Activated CD4-positive, alpha-beta memory T cell treated with anti-CD3 and anti-CD28 coated beads, Interleukin-2, amount 10 ng/mL, durations not matched to agents 7 days and 5 days (primary cell): ENCODE measurements at regions of chr7 and their contacts with region 1.

Region 1: GRCh38 chr7:91940572-91941341 is at the start of gene AKAP9:
- DNase-seq: peak; percentile 90
- H3K4me3 Mint-ChIP-seq: peak within 1 kb of the TSS; percentile 89
- H3K27ac Mint-ChIP-seq: peak within 1 kb of the TSS; percentile 91
- H3K4me1 Mint-ChIP-seq: peaks cover 33% of the 10 kb centered on the region
- H3K27me3 Mint-ChIP-seq: no peaks in the 10 kb centered on the region
- total RNA-seq, gene AKAP9: 32.4 to 41.7 TPM

Region 2: DNA sequence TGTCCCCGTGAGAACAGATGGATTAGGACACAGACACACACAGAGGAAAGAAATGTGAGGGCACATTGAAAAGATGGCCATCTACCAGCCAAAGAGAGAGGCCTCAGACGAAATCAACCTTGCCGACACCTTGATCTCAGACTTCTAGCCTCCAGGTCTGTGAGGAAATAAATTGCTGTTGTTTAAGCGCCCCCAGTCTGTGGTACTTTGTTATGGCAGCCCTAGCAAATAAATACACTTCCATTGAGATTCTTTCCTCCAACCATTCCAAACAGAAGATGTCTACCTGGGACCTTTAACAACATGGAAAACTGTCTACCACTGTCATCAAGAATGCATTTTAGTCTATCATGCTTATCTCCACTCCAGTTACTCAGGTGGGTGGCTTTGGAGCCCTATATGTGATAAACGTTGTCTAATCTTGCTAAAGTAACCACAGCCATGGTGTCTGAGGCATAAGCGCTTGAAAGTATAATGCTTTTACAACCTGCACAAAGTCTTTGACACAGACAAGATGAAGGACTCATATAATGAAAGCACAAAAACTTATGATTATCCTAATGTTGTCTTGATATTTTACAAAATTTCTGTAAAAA is 304.5 kb before region 1 on chr7:
- CTCF ChIA-PET with region 1: no interaction called
- POLR2A ChIA-PET with region 1: no interaction called
- DNase-seq: no peak
- H3K4me3 Mint-ChIP-seq: no peak overlapping the region
- H3K27ac Mint-ChIP-seq: no peak overlapping the region
- H3K4me1 Mint-ChIP-seq: no peaks in the 10 kb centered on the region
- H3K27me3 Mint-ChIP-seq: no peaks in the 10 kb centered on the region

Region 3: DNA sequence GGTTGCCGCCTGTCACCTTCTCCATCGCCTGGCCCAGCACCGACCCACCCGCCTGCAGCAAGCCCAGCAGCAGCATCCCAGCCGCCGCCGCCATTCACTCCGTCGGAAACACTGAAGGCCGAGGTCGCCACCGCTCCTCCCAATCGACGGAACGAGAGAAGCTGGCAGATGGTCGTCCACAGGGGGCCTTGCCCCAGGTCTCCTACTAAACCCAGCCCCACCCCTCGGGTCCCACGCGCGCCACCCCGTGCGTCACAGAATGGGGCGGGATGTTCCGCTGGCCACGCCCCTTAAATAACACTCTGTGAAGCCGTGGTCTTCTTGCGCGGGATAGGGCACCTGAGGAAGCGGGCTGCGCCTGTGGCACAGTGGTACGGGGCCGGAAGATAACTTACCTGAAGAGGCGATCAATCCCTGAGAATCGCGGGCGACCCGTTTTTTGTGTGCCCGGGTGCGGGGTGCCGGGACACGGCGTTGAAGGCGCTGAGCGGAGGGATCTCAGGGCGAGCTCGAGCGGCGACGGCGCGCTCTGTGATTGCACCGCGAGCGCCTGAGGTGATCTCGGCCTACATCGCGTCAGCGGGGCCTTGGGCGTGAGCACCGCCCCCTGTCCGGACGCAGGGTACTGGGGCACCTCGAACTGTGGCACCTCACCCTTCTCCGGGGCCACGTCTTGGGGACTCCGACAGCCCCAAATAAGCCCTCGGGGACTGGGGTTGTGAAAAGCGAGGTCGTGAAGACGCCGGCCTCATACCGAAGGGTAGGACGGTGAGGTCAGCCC is 193.7 kb after region 1 on chr7 and contains the start of gene CYP51A1:
- CTCF ChIA-PET with region 1: no interaction called
- POLR2A ChIA-PET with region 1: interaction called, 19 read pairs
- DNase-seq: peak; percentile 93
- H3K4me3 Mint-ChIP-seq: peak within 1 kb of the TSS; percentile 90
- H3K27ac Mint-ChIP-seq: peak within 1 kb of the TSS; percentile 95
- H3K4me1 Mint-ChIP-seq: peaks cover 41% of the 10 kb centered on the region
- H3K27me3 Mint-ChIP-seq: peaks cover 1% of the 10 kb centered on the region
- total RNA-seq, gene CYP51A1: 94.3 to 97.9 TPM